OCI-LY7 (cell line): ENCODE measurements at regions of chr6 and their contacts with region 1.

Region 1: DNA sequence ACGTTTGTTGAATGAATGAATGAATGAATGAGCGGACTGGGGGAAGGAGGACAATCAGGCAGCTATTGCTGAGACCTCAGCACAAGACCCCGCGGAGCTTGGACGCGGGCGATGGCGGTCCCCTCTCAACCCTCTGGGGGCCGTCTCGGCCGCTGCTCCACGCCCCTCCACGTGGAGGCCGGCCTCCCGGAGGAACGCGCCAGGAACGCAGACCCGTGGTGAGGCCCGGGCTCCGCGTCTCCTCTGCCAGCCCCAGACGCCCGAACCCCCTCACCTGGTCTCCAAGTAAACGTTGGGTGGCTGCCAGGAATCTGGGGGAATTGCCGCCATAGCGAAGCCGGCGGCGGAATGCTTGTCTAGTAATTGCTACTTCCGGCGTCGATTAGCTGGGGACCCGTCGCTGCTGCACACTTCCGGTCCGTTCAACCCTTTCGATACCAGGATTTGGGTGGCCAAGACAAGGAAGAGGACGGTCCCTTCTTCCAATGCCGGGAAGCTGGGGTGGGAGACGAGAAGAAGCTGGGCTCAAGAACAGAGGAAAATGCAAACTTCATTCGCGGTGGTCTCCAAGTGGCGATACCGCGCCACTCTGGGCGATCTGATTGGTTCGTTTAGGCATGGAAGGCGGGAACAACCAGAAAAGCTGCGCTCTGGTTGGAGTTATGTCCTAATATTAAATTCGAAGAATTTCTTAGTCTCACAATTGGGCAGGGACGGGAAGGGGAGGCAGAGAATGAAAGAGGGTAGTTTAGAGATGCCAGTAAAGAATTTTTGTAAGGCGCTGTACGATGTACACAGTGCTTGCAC is at the start of gene PPIL1:
- DNase-seq: peak; percentile 94
- H3K4me3 ChIP-seq: peak within 1 kb of the TSS; percentile 88
- H3K27ac ChIP-seq: peak within 1 kb of the TSS; percentile 68
- H3K4me1 ChIP-seq: peaks cover 24% of the 10 kb centered on the region
- CTCF ChIP-seq: 0 out of 2 replicates have a peak, but pooled peaks have one; percentile 15
- total RNA-seq, gene PPIL1: 34.6 and 38.9 TPM in 2 replicates

Region 2: GRCh38 chr6:36120979-36121786 is 753.5 kb before region 1 on chr6:
- CTCF ChIA-PET with region 1: no interaction called
- POLR2A ChIA-PET with region 1: no interaction called
- intact Hi-C with region 1: no loop called
- DNase-seq: peak; percentile 67
- H3K4me3 ChIP-seq: peak overlapping the region; percentile 33
- H3K27ac ChIP-seq: peak overlapping the region; percentile 60
- H3K4me1 ChIP-seq: peaks cover 44% of the 10 kb centered on the region
- CTCF ChIP-seq: no peak

Region 3: DNA sequence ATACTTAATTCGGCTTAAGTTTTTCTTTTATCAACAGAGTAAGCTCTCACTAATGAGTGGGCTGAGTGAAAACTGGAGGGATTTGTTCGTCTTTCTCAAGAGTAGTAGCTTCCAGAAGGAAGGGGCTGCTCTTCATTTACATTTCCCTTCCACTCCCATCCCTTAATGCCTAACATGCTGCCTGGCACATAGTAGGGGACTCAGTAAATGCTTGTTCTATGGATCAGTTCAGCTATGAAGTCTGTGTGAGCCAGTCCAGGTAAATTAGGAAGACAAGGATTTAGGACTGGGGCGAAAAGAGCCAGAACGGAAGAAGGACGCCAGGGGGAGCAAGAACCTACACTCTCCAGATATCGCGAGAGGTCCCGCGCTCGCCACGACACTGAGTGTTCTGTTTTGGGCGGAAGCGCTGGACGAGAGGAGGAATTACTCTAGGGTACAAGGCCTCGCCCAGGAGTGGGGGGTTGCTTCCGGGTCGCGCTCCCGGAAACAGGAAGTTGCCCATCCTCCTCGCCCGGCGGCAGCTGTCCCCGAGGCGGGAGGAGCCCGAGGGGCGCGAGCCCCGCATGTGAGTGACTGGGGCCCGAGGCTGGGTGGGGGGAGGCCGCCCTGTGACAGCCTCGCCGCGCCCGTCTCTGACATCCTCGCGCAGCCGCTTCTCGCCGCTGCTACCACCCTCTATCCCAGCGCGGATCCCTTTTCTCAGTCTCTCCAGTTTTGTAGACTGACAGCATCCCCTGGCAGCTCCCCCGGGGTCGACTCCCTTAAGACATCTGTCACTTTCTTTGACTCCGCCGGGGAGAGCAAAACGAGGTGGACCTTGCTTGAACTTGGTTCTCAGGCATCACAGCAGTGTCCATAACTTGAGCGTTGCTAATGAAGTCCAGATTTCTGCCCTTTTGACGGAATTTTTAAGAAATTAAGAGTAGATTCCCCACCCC is 11.1 kb after region 1 on chr6 and contains the start of gene C6orf89:
- CTCF ChIA-PET with region 1: interaction called, 20 read pairs
- POLR2A ChIA-PET with region 1: interaction called, 50 read pairs
- intact Hi-C with region 1: no loop called
- DNase-seq: peak; percentile 100
- H3K4me3 ChIP-seq: peak within 1 kb of the TSS; percentile 82
- H3K27ac ChIP-seq: peak within 1 kb of the TSS; percentile 40
- H3K4me1 ChIP-seq: peaks cover 24% of the 10 kb centered on the region
- CTCF ChIP-seq: peak; percentile 87
- total RNA-seq, gene C6orf89: 14.7 and 20.1 TPM in 2 replicates

Region 4: DNA sequence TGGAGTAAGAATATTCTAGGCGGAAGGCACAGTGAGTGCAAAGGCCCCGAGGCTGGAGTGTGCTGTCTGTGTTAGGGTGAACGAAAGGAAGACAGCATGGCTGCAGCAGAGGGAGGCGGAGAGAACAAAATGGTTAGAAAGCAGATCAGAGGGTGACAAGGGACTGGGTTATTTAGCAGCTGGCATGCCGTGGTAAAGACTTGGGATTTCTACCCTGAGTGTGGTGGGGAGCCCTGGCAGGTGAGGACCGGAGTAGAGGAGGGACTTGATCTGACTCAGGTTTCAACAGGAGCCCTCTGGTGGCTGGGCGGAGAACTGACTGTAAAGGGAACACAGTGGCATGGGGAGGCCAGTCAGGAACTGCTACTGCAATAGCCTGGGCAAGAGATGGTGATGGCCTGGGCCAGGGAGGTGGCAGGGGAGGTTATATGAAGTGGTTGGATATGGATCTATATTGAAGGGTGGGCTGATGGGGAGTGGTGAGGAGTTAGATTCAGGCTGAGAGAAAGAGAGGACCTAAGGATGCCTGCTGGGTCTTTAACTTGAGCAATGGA is 333.3 kb after region 1 on chr6:
- CTCF ChIA-PET with region 1: no interaction called
- POLR2A ChIA-PET with region 1: no interaction called
- intact Hi-C with region 1: no loop called
- DNase-seq: peak; percentile 81
- H3K4me3 ChIP-seq: no peak overlapping the region
- H3K27ac ChIP-seq: no peak overlapping the region
- H3K4me1 ChIP-seq: no peaks in the 10 kb centered on the region
- CTCF ChIP-seq: peak; percentile 88